ENCODE measurements at regions of chr6 and their contacts with region 1.

Region 1: GRCh38 chr6:7261032-7261841 is 51.8 kb downstream of the SSR1 start:
- DNase-seq: peak; percentile 86
- H3K4me3 ChIP-seq: peak overlapping the region; percentile 8 to 51 (median 33)
- H3K27ac ChIP-seq: no peak overlapping the region
- H3K4me1 ChIP-seq: peaks cover 7% of the 10 kb centered on the region
- H3K27me3 ChIP-seq: no peaks in the 10 kb centered on the region
- CTCF ChIP-seq: no peak
- POLR2A ChIP-seq: peak; percentile 86

Region 2: DNA sequence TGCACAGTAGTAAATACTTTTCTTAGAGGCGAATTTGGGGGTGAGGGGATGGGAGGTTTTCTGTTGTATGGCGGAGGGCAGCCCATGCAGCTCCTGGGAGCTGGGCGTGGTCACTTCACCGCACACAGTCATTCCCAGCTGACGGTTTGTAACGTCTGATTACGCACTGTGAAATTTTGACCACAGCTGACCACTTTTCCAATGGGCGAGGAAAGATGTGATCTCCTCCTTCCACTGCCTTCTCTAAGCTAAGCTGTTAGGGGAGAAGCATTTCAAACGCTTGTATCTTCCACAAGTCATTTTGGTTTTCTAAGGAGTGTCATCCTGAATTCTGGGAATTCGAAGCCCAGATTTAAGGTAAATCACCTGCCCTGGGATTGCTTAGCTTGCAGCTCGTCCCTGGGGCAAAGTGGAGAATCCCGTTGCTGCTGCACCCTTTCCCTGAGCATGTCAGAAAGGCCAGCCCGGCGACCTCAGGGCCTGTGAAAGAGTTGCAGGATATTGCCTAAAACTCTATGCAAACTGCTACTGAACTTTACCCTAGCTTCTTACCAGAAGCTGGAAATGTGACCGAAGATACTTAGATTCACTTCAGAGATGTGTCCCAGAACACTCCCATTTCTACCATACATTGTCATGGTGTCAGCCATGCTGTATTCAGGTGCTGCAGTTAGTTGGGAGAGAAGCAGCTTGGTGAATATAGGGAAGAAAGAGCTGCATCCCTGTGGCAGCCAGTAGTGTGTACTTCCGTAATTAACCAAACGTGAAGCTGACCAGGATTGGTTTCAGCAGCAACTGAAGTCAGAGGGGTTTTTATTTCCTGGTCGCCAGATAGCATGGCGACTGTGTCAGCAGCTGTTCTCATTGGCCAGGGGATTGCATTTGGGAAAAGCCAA is 94.6 kb before region 1 on chr6:
- CTCF ChIA-PET with region 1: no interaction called
- POLR2A ChIA-PET with region 1: no interaction called
- dilution Hi-C with region 1: no loop called
- intact Hi-C with region 1: no loop called
- DNase-seq: no peak
- H3K4me3 ChIP-seq: no peak overlapping the region
- H3K27ac ChIP-seq: no peak overlapping the region
- H3K4me1 ChIP-seq: peaks cover 9% of the 10 kb centered on the region
- H3K27me3 ChIP-seq: no peaks in the 10 kb centered on the region
- CTCF ChIP-seq: no peak
- POLR2A ChIP-seq: no peak

Region 3: GRCh38 chr6:7276199-7276524 is 14.9 kb after region 1 on chr6:
- CTCF ChIA-PET with region 1: interaction called, 15 read pairs
- POLR2A ChIA-PET with region 1: no interaction called
- dilution Hi-C with region 1: no loop called
- intact Hi-C with region 1: no loop called
- DNase-seq: no peak
- H3K4me3 ChIP-seq: no peak overlapping the region
- H3K27ac ChIP-seq: no peak overlapping the region
- H3K4me1 ChIP-seq: no peaks in the 10 kb centered on the region
- H3K27me3 ChIP-seq: no peaks in the 10 kb centered on the region
- CTCF ChIP-seq: no peak
- POLR2A ChIP-seq: no peak

Measured in endothelial cell of umbilical vein (primary cell).